ENCODE measurements at regions of chr1 and their contacts with region 1.

Region 1: GRCh38 chr1:43650310-43651085 is 549 bp downstream of the KDM4A start:
- DNase-seq: peak; percentile 98
- ATAC-seq: peak; percentile 76
- H3K4me3 ChIP-seq: peak overlapping the region; percentile 93
- H3K27ac ChIP-seq: peak overlapping the region; percentile 62
- H3K4me1 ChIP-seq: peaks cover 13% of the 10 kb centered on the region
- H3K27me3 ChIP-seq: no peaks in the 10 kb centered on the region
- CTCF ChIP-seq: no peak

Region 2: DNA sequence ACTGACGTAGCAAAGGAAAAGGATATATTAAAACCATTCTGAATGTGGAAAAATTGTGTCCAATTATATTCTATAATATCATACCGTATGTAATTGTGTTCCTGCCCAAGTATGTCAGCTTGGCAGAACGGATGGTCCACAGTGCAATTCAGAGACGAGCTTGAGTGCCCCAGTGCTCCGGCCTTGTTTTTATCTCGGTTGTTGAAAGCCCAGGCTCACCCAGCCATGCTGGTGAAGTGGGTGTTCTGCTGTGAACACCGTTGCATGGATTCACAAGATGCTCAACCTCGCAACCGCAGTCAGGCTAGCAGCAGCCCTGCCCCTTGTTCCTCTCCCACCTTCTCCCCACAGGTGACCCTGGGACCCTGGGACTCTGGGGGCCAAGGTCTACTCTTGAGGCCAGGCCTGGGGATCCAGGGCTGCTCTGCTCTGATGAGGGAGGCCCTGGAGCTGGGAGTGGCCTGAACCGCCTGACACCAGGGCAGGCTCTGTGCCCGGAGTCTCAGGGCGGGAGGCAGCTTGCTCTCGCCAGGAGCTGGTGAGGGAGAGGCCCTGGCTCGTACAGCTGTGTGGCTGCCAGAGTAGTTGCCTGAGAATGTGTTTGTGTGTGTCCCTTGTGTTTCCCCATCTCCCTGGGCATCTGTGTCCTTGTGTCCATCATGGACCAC is 108.6 kb before region 1 on chr1:
- CTCF ChIA-PET with region 1: interaction called, 3 read pairs
- POLR2A ChIA-PET with region 1: interaction called, 12 read pairs
- intact Hi-C with region 1: no loop called
- DNase-seq: no peak
- ATAC-seq: no peak
- H3K4me3 ChIP-seq: no peak overlapping the region
- H3K27ac ChIP-seq: no peak overlapping the region
- H3K4me1 ChIP-seq: peaks cover 14% of the 10 kb centered on the region
- H3K27me3 ChIP-seq: no peaks in the 10 kb centered on the region
- CTCF ChIP-seq: no peak

Region 3: DNA sequence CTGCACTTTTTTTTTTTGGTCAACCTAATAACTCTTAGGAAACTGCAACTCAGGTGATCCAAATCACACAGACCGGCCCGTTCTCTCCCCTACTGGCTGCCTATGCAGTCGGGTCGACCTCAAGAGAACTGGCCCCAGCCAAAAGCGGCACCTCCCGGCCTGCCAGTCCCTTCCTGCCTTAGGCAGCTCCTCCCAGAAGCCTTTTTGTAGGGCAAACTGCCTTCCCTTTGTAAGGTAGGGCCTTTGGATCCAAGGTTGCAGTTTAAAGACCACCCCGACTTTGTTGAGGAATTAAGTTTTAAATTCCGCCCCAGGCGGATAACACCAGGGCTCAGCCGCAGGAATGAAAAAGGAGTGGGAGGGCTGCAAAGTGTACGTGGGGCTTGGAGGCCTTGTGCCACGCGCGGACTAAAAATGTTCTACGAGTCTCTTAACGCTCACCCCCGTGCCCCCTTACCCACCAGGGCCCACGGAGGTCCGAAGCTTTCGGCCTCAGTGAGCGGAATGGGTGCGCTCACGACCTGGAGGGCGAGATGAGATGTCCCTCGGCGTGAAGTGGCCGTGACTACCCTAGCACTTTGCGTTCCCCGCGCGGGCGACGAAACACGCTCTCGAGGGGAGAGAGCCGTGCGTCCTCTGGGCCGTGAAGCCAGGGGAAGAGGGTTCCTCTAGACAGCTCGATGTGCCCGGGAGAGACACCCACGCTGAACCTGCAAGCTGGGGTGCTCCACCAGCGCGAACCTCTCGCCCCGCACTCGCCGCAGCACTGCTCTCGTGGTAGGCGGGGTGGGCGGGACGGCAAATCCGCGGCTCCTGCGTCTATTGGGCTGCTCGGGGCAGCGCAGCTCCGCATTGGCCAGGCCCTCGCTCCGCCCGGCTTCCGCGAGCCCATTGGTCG is 56.3 kb after region 1 on chr1:
- CTCF ChIA-PET with region 1: no interaction called
- POLR2A ChIA-PET with region 1: interaction called, 3 read pairs
- intact Hi-C with region 1: loop called (anchors 2 kb)
- DNase-seq: peak; percentile 94
- ATAC-seq: peak; percentile 91
- H3K4me3 ChIP-seq: peak overlapping the region; percentile 83
- H3K27ac ChIP-seq: peak overlapping the region; percentile 17; the same call in 1 of the 2 replicates
- H3K4me1 ChIP-seq: peaks cover 38% of the 10 kb centered on the region
- H3K27me3 ChIP-seq: no peaks in the 10 kb centered on the region
- CTCF ChIP-seq: no peak

Region 4: GRCh38 chr1:43868741-43869067 is 218.2 kb after region 1 on chr1:
- CTCF ChIA-PET with region 1: no interaction called
- POLR2A ChIA-PET with region 1: no interaction called
- intact Hi-C with region 1: no loop called
- DNase-seq: no peak
- ATAC-seq: no peak
- H3K4me3 ChIP-seq: no peak overlapping the region
- H3K27ac ChIP-seq: no peak overlapping the region
- H3K4me1 ChIP-seq: 0 out of 2 replicates have a peak, but pooled peaks cover 7% of the 10 kb centered on the region
- H3K27me3 ChIP-seq: no peaks in the 10 kb centered on the region
- CTCF ChIP-seq: no peak

Measured in PC-3 (cell line).